ENCODE measurements at regions of chr10 and their contacts with region 1.

Region 1: DNA sequence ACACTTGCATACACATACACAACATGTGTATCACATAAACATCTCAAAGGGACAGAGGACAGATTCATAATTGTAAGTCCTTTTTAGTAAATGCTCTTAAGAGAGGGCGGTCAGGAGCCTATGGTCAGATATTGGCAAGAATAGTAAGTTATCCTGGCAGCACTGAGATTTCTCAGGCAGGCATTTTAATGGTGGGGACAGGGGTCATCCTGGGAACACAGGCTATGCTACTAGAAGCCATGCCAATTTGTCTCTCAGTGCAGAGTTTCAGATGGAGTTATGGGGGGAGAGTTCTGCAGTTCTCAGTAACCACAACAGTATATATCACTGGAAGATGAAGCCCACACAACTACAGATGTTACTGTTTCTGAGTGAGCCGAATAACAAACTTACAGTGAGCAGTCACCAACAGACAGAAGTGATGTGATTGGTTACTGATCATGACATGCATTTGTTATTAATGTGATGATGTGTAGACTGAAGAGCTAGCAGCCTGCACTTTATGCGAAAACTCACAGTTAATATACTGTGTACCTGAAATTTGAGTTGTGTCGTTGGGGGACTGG is 16.4 kb downstream of the ZNF487 start:
- DNase-seq: no peak
- ATAC-seq: no peak
- H3K4me3 ChIP-seq: no peak overlapping the region
- H3K4me3 Mint-ChIP-seq: peak overlapping the region; percentile 83
- H3K27ac ChIP-seq: peak overlapping the region; percentile 85 to 90
- H3K27ac Mint-ChIP-seq: peak overlapping the region; percentile 98
- H3K4me1 ChIP-seq: peaks cover 47 to 71% of the 10 kb centered on the region in 2 donors
- H3K4me1 Mint-ChIP-seq: peaks cover 48% of the 10 kb centered on the region
- H3K27me3 ChIP-seq: no peaks in the 10 kb centered on the region
- H3K27me3 Mint-ChIP-seq: no peaks in the 10 kb centered on the region
- CTCF ChIP-seq: no peak

Region 2: GRCh38 chr10:43138021-43138756 is 315.2 kb before region 1 on chr10 and contains the start of gene CSGALNACT2:
- CTCF ChIA-PET with region 1: no interaction called
- POLR2A ChIA-PET with region 1: no interaction called
- intact Hi-C with region 1: no loop called
- DNase-seq: peak; percentile 93
- ATAC-seq: peak; percentile 84
- H3K4me3 ChIP-seq: peak within 1 kb of the TSS; percentile 75 to 98 (median 83)
- H3K4me3 Mint-ChIP-seq: peak within 1 kb of the TSS; percentile 99
- H3K27ac ChIP-seq: peak within 1 kb of the TSS; percentile 92 to 95
- H3K27ac Mint-ChIP-seq: peak within 1 kb of the TSS; percentile 98
- H3K4me1 ChIP-seq: peaks cover 31 to 32% of the 10 kb centered on the region in 2 donors
- H3K4me1 Mint-ChIP-seq: peaks cover 48% of the 10 kb centered on the region
- H3K27me3 ChIP-seq: no peaks in the 10 kb centered on the region
- H3K27me3 Mint-ChIP-seq: no peaks in the 10 kb centered on the region
- CTCF ChIP-seq: peak; percentile 5
- total RNA-seq, gene CSGALNACT2: 24.0 and 25.0 TPM in 2 replicates

Region 3: GRCh38 chr10:43384252-43385221 is 68.8 kb before region 1 on chr10:
- CTCF ChIA-PET with region 1: no interaction called
- POLR2A ChIA-PET with region 1: no interaction called
- intact Hi-C with region 1: no loop called
- DNase-seq: no peak
- ATAC-seq: no peak
- H3K4me3 ChIP-seq: no peak overlapping the region
- H3K4me3 Mint-ChIP-seq: no peak overlapping the region
- H3K27ac ChIP-seq: peak overlapping the region in 1 of 2 donors; percentile 11
- H3K27ac Mint-ChIP-seq: peak overlapping the region; percentile 37
- H3K4me1 ChIP-seq: peaks cover 11 to 13% of the 10 kb centered on the region in 2 donors
- H3K4me1 Mint-ChIP-seq: peaks cover 27% of the 10 kb centered on the region
- H3K27me3 ChIP-seq: no peaks in the 10 kb centered on the region
- H3K27me3 Mint-ChIP-seq: no peaks in the 10 kb centered on the region
- CTCF ChIP-seq: no peak

Region 4: DNA sequence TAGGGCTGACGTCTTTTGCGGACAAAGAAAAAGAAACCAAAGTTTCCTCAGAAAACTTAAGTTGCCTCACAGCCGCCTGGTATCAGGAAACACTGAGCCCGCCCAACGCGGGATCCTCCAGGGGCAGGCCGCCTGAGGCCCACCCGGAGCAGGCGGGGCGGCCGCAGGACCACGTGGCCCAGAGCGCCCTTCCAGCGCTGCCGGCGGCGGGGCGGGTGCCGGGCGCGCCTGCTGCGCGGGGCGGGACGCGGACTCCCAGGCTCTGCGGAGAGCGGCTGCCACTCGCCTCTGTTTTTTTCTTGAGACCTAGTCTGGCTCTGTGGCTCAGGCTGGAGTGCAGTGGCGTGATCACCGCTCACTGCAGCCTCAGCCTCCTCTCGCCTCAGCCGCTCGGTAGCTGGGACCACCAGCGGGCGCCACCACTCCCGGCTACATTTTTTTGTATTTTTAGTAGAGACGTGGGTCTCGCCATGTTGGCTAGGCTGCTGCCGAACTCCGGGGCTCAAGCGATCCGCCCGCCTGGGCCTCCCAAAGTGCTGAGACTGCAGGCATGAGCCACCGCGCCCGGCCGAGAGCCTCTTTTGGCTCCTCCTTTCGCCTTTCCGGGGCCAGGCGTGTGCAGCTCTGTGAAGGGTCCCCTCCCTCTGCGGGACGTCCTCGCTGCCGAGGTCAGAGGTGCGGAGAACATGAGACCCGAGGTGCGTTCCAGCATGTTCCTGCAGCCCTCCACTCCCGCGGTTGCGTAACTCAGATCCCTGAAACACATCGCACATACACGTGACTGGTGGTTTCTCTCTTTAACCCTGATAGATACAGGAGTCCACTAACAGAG is 32.8 kb before region 1 on chr10:
- CTCF ChIA-PET with region 1: interaction called, 5 read pairs
- POLR2A ChIA-PET with region 1: interaction called, 14 read pairs
- intact Hi-C with region 1: no loop called
- DNase-seq: peak; percentile 85
- ATAC-seq: peak; percentile 83
- H3K4me3 ChIP-seq: peak overlapping the region; percentile 25 to 80 (median 70)
- H3K4me3 Mint-ChIP-seq: peak overlapping the region; percentile 95
- H3K27ac ChIP-seq: peak overlapping the region; percentile 90 to 95
- H3K27ac Mint-ChIP-seq: peak overlapping the region; percentile 98
- H3K4me1 ChIP-seq: peaks cover 28 to 38% of the 10 kb centered on the region in 2 donors
- H3K4me1 Mint-ChIP-seq: peaks cover 26% of the 10 kb centered on the region
- H3K27me3 ChIP-seq: no peaks in the 10 kb centered on the region
- H3K27me3 Mint-ChIP-seq: no peaks in the 10 kb centered on the region
- CTCF ChIP-seq: peak; percentile 35

Region 5: GRCh38 chr10:43491855-43492254 is 38.5 kb after region 1 on chr10:
- CTCF ChIA-PET with region 1: no interaction called
- POLR2A ChIA-PET with region 1: no interaction called
- intact Hi-C with region 1: no loop called
- DNase-seq: no peak
- ATAC-seq: no peak
- H3K4me3 ChIP-seq: no peak overlapping the region
- H3K4me3 Mint-ChIP-seq: no peak overlapping the region
- H3K27ac ChIP-seq: no peak overlapping the region
- H3K27ac Mint-ChIP-seq: no peak overlapping the region
- H3K4me1 ChIP-seq: no peaks in the 10 kb centered on the region
- H3K4me1 Mint-ChIP-seq: no peaks in the 10 kb centered on the region
- H3K27me3 ChIP-seq: no peaks in the 10 kb centered on the region
- H3K27me3 Mint-ChIP-seq: no peaks in the 10 kb centered on the region
- CTCF ChIP-seq: no peak

Measured in B cell (primary cell).